Activated CD8-positive, alpha-beta T cell treated with anti-CD3 and anti-CD28 coated beads, Interleukin-2, amount 10 ng/mL, durations not matched to agents 7 days and 5 days (primary cell): ENCODE measurements at regions of chr22 and their contacts with region 1.

Region 1: DNA sequence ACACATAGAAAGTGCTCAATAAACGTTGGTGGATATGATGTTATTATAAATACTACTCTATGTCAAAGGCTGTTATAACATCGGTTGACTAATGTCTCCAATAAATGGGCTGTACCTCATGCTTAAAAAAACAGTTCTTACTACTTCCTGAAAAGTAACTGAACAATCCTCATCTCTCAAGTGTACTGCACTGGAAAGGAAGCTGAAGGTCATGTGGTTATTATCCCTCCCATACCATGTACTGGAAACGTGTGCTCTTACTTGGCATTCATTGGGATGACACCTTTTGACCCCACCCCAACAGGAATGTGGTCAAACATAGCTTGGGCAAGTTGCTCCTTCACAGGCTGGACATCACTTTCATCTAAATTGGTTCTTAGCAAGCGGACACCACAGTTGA is 10.6 kb downstream of the RTCB start:
- DNase-seq: no peak
- ATAC-seq: no peak
- H3K4me3 Mint-ChIP-seq: no peak overlapping the region
- H3K27ac Mint-ChIP-seq: no peak overlapping the region
- H3K4me1 Mint-ChIP-seq: no peaks in the 10 kb centered on the region
- H3K27me3 Mint-ChIP-seq: no peaks in the 10 kb centered on the region

Region 2: DNA sequence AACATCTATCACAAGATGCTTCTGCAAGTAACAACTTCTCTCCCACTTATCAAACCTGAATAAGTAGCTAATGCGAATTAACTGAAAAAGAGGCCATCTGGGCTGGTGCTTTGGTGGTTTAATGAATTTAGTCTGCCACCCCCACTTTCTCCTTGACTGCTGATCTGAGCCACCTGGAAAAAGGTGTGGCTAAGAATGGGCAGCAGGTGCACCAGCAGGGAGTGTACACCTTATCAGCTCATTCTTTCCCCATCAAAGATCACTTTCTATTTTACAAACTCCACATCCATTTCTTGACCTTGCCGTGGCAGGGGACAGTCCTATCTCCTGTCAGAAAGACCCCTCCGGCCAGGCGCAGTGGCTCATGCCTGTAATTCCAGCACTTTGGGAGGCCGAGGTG is 37.3 kb before region 1 on chr22:
- CTCF ChIA-PET with region 1: no interaction called
- POLR2A ChIA-PET with region 1: no interaction called
- DNase-seq: no peak
- ATAC-seq: no peak
- H3K4me3 Mint-ChIP-seq: no peak overlapping the region
- H3K27ac Mint-ChIP-seq: no peak overlapping the region
- H3K4me1 Mint-ChIP-seq: peaks cover 2% of the 10 kb centered on the region
- H3K27me3 Mint-ChIP-seq: peaks cover 2% of the 10 kb centered on the region

Region 3: GRCh38 chr22:32389685-32390084 is 11.8 kb before region 1 on chr22:
- CTCF ChIA-PET with region 1: interaction called, 21 read pairs
- POLR2A ChIA-PET with region 1: interaction called, 3 read pairs
- DNase-seq: peak; percentile 42
- ATAC-seq: no peak
- H3K4me3 Mint-ChIP-seq: no peak overlapping the region
- H3K27ac Mint-ChIP-seq: no peak overlapping the region
- H3K4me1 Mint-ChIP-seq: no peaks in the 10 kb centered on the region
- H3K27me3 Mint-ChIP-seq: no peaks in the 10 kb centered on the region

Region 4: DNA sequence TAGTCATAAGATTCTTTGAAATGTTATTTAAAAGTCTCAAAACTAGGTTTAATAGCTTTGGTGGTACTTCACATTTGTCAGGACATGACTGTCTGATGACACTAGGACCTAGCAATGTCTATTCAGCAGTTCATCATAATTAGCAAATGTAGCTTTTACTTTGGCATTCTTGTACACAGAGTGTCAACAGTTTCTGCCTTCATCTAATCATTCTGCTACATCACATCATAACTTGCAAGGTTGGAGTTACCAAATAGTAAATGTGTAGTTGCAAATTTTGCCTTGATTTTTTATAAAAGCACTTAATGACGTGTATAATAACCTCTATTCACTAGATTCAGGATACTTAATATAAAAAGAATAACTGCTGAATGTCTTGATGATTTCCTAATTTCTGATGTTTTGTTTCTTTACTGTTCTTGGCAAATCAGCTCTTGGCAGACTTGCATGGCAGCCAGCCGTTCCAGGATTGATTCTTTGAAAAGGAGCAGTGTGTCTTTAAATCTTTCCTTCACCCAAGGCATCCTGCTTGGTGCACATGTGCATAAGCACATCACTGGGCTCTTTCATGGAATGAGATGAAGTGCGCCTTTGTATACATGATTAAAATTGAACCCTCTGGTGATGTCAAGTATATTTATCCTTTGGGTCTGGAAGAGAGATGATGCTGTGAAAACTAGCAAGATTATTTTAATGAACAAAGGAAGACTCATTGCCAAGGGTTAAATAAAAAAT is 85.3 kb after region 1 on chr22:
- CTCF ChIA-PET with region 1: no interaction called
- POLR2A ChIA-PET with region 1: no interaction called
- DNase-seq: no peak
- ATAC-seq: no peak
- H3K4me3 Mint-ChIP-seq: no peak overlapping the region
- H3K27ac Mint-ChIP-seq: no peak overlapping the region
- H3K4me1 Mint-ChIP-seq: peaks cover 5% of the 10 kb centered on the region
- H3K27me3 Mint-ChIP-seq: no peaks in the 10 kb centered on the region